ENCODE measurements at regions of chr17 and their contacts with region 1.

Region 1: DNA sequence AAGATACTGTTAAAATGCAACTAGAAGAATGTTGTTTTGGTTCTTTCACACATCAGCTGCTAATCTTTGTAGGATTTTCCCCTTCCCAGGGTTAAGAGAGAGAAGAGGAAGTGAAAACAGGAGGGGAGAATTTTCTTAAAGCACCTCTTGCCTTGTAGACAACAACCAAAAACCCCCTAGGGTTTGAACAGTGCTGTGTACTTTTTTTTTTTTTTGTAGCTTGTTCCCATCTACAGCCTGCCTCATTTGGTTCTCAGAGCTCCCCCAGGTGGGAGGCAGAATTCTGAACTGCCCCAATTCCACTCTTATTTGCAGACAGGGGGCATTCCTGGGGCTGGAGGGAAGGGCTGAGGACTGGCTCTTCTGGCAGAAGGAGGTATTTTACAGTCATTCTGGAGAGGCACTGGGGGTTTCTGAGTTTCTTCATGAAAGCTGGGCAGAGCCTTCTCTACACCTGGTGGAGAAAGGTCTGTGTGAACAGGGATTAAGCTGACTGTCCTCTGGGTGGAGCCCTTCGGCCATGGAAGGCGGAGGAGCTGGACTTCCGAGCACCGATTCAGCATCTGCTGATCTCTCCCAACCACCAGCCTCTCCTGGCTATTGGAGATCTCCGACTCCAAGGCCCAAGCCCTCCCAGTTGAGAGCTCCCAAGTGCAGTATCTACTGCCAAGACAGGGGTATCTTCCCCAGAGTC is 32.2 kb downstream of the SMARCE1 start:
- DNase-seq: peak; percentile 93
- ATAC-seq: peak; percentile 75
- H3K4me3 ChIP-seq: peak overlapping the region; percentile 35; the same call in 1 of the 2 replicates
- H3K27ac ChIP-seq: peak overlapping the region; percentile 29
- H3K4me1 ChIP-seq: peaks cover 30% of the 10 kb centered on the region
- H3K27me3 ChIP-seq: no peaks in the 10 kb centered on the region
- CTCF ChIP-seq: peak; percentile 57 to 65 (median 60)
- EP300 ChIP-seq: peak; percentile 97 to 98
- POLR2A ChIP-seq: no peak
- RAD21 ChIP-seq: peak; percentile 68

Region 2: DNA sequence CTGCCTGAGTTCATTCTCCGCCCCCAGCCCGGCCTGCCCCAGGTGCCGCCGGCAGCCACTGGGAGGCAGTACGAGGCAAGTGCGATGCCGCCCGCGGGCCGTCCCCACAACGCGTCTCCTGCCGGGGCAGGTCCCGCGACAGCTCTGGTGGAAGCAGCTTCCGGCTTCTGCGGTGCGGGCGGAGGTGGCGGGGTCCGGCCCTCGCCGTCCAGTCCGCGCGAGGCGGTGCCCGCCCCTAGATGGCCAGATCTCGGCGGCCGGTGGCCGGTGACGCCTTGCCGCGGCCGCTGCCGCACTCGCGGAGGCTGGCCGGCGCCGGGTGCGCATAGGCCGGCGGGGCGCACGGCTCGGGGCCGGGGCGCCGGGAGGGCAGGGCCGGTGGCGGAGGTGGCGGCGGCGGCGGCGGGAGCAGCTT is 252.7 kb before region 1 on chr17:
- CTCF ChIA-PET with region 1: interaction called, 15 read pairs
- POLR2A ChIA-PET with region 1: no interaction called
- RAD21 ChIA-PET with region 1: interaction called, 9 read pairs
- SMC1A ChIA-PET with region 1: interaction called, 3 read pairs
- in situ Hi-C with region 1: no loop called
- intact Hi-C with region 1: loop called (anchors 5 kb)
- DNase-seq: no peak
- ATAC-seq: peak; percentile 95
- H3K4me3 ChIP-seq: peak overlapping the region; percentile 65; the same call in 1 of the 2 replicates
- H3K27ac ChIP-seq: no peak overlapping the region
- H3K4me1 ChIP-seq: no peaks in the 10 kb centered on the region; the same call in none of the 2 replicates
- H3K27me3 ChIP-seq: peaks cover 0 to 2% of the 10 kb centered on the region in 2 experiments; a peak in 1 of 4 replicates
- CTCF ChIP-seq: peak; percentile 85
- EP300 ChIP-seq: no peak
- POLR2A ChIP-seq: peak; percentile 78
- RAD21 ChIP-seq: peak; percentile 64

Region 3: DNA sequence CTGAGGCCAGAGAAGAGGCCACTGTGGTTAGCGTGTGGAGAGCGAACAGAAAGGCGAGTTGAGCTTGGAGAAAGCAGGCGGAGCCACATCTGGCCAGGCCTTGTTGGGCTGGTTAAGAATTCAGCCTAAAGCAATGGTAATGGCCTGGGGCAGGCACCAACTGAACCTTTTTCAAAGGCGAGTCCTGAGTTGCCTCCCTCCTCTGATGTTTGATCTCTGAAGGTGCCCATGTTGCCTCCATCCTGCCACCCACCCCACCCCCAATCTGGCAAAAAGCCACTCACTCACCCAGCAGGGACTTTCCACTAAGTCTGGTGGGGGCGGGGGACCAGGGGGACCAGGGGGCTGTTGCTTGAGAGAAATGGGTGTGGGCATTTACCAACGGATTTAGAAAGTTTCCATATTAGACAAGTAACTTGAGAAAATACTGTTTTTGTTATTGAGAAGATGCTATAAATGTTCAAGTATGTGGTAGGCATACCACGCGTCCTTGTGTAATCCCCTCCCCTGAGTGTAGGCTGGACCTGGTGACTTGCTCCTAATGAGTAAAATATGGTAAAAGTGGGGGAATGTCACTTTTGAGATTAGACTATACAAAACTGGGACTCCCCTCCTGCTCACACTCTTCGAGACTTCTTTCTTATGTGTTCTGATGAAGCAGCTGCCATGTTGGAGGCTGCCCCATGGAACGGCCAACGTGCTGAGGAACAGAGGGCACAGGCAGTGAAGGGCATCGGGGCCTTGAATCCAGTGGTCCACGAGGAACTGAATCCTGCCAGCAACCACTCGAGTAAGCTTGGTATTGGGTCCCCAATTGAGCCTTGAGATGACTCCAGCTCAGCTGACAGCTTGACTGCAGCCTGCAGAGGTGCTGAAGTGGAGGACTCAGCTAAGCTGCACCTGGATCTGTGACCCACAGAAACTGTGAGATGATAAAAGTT is 84.1 kb before region 1 on chr17:
- CTCF ChIA-PET with region 1: interaction called, 193 read pairs
- POLR2A ChIA-PET with region 1: interaction called, 40 read pairs
- RAD21 ChIA-PET with region 1: interaction called, 123 read pairs
- SMC1A ChIA-PET with region 1: interaction called, 175 read pairs
- in situ Hi-C with region 1: no loop called
- intact Hi-C with region 1: no loop called
- DNase-seq: peak; percentile 71
- ATAC-seq: peak; percentile 74
- H3K4me3 ChIP-seq: no peak overlapping the region
- H3K27ac ChIP-seq: peak overlapping the region; percentile 60; the same call in 1 of the 2 replicates
- H3K4me1 ChIP-seq: peaks cover 38% of the 10 kb centered on the region
- H3K27me3 ChIP-seq: no peaks in the 10 kb centered on the region
- CTCF ChIP-seq: no peak
- EP300 ChIP-seq: peak; percentile 6 to 14; a peak in 1 of 4 replicates
- POLR2A ChIP-seq: no peak
- RAD21 ChIP-seq: no peak

Region 4: DNA sequence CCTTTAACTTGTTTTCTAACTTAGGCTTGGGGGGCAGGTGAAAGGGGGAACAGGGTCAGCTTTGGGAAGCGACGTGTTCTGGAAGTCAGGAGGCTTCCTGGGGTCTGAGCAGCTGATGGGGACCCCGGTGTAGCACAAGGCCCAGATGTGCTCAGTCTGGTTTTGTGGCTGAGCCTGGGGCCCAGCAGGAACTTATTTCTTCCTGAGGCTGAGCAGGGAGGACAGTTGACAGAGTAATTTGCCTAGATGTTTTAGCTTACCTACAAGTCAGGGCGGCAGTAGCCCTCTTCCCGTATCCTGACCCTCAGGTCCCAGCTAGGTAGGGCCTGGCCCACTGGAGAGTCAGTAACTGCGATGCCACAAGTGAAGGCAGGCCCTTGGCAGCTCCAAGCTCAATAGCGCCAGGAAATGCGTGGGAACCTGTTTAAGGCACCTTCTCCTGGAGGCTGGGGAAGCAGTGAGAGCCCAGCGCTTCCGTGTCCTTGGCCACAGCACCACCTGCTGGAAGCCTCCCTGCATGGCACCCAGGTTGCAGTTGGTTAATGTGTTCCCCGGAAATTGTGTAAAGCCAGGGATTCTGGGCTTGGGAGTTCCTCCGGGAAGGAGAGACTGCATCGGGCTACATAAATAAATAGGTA is 55.4 kb before region 1 on chr17:
- CTCF ChIA-PET with region 1: interaction called, 164 read pairs
- POLR2A ChIA-PET with region 1: interaction called, 97 read pairs
- RAD21 ChIA-PET with region 1: interaction called, 185 read pairs
- SMC1A ChIA-PET with region 1: interaction called, 123 read pairs
- in situ Hi-C with region 1: no loop called
- intact Hi-C with region 1: loop called (anchors 1 kb)
- DNase-seq: peak; percentile 72
- ATAC-seq: peak; percentile 5
- H3K4me3 ChIP-seq: peak overlapping the region; percentile 70
- H3K27ac ChIP-seq: peak overlapping the region; percentile 98
- H3K4me1 ChIP-seq: peaks cover 33% of the 10 kb centered on the region
- H3K27me3 ChIP-seq: no peaks in the 10 kb centered on the region
- CTCF ChIP-seq: peak; percentile 91 to 97 (median 94)
- EP300 ChIP-seq: no peak
- POLR2A ChIP-seq: no peak; the same call in 1 of the 2 replicates
- RAD21 ChIP-seq: peak; percentile 90

Region 5: DNA sequence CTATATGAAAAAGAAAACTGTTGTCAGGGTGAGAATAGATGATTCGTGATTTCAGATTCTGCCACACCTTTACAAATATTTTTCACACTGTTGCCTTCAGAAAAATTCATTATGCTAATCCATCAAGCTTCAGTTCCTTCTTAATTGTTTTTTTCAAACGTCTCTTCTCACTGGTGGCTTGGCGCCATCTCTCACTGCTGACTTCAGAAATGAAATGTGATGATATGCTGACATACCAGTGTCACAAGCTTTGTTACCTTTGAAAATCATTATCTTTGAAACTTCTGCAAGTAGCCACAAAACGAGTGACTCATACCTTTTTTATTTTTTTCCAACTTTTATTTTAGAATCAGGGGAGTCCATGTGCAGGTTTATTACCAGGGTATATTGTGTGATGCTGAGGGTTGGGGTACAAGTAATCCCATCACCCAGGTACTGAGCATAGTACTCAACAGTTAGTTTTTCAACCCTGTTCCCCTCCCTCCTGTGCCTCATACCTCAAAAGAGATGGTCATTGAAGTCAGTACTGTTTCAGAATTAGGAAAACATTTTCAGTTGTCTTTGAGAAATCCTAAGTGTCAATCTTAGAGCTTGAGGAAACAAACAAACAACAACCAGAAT is 63.6 kb after region 1 on chr17:
- CTCF ChIA-PET with region 1: interaction called, 14 read pairs
- POLR2A ChIA-PET with region 1: interaction called, 5 read pairs
- RAD21 ChIA-PET with region 1: interaction called, 14 read pairs
- SMC1A ChIA-PET with region 1: interaction called, 6 read pairs
- in situ Hi-C with region 1: no loop called
- intact Hi-C with region 1: no loop called
- DNase-seq: no peak
- ATAC-seq: peak; percentile 84
- H3K4me3 ChIP-seq: no peak overlapping the region; the same call in 1 of the 2 replicates
- H3K27ac ChIP-seq: no peak overlapping the region
- H3K4me1 ChIP-seq: no peaks in the 10 kb centered on the region
- H3K27me3 ChIP-seq: peaks cover 0 to 8% of the 10 kb centered on the region in 2 experiments; a peak in 1 of 4 replicates
- CTCF ChIP-seq: no peak
- EP300 ChIP-seq: peak in 1 of 2 experiments; percentile 52; a peak in 1 of 4 replicates
- POLR2A ChIP-seq: no peak
- RAD21 ChIP-seq: no peak

Region 6: DNA sequence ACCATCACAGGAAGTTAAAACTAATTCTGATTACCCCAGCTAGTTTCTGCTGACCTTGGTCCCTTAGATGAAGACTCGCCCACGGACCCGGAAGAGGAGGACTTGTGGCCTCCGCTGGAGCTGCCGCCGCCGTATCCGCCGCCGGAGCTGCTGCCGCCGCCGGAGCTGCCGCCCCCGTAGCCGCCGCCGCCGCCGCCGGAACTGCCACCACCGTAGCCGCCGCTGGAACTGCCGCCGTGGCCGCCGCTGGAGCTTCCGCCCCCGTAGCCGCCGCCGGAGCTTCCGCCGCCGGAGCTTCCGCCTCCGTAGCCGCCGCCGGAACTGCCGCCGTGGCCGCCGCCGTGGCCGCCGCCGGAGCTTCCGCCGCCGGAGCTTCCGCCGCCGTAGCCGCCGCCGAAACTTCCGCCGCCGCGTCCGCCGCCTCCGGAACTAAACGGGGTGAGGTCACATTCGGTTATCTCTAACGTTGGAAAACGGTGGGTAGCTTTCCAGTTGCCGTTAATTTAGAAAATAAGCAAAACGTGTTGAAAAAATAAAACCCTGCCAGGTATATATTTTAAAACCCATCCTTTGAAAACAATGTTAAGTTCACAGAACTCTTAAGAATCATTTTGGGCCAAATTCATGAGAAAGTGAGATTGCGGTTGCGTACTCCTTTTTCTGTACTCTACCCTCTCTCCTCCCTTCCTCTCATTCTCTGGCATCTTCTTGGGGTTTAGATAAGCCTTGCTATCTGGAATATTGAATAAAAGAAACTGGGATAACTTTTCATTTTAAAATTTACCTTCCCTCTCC is 203.5 kb after region 1 on chr17:
- CTCF ChIA-PET with region 1: interaction called, 10 read pairs
- POLR2A ChIA-PET with region 1: interaction called, 3 read pairs
- RAD21 ChIA-PET with region 1: interaction called, 9 read pairs
- SMC1A ChIA-PET with region 1: interaction called, 4 read pairs
- in situ Hi-C with region 1: no loop called
- intact Hi-C with region 1: no loop called
- DNase-seq: no peak
- ATAC-seq: peak; percentile 91
- H3K4me3 ChIP-seq: peak overlapping the region; percentile 78
- H3K27ac ChIP-seq: peak overlapping the region; percentile 76
- H3K4me1 ChIP-seq: peaks cover 12% of the 10 kb centered on the region
- H3K27me3 ChIP-seq: no peaks in the 10 kb centered on the region
- CTCF ChIP-seq: no peak
- EP300 ChIP-seq: no peak
- POLR2A ChIP-seq: peak; percentile 85
- RAD21 ChIP-seq: no peak

Region 7: DNA sequence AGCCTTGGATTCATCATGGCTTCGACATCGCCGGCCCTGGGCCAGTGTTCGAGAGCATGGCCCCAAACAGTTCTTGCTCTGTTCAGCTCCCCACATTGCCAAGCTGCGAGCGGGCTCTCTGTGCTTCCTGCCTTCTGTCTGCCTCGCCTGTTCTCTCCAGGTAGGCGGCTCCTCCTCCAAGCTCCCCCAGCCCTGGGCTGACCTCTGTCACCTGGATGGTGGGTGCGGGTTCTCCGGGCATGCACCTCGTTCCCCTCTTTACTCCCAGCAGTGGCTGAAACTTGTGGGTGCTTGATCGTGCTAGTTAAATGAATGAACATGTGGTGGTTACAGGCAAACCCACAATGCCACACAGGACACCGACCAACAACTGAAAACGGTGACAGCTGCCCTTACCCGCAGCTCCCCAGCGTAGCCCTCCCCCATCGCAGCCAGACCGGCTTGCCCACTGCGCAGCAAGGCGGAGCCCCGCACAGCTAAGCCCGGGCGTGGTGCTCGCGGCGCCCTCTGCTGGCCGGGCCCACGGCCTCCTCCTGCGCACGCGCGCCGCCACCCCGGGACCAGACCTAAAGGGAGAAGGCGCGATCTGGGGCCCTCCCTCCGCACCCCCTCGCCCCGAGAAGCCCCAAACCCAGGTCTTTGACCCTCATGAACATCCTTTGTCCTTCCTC is 1050.3 kb after region 1 on chr17:
- CTCF ChIA-PET with region 1: interaction called, 40 read pairs
- POLR2A ChIA-PET with region 1: no interaction called
- RAD21 ChIA-PET with region 1: interaction called, 24 read pairs
- SMC1A ChIA-PET with region 1: interaction called, 5 read pairs
- in situ Hi-C with region 1: loop called (anchors 10 kb)
- intact Hi-C with region 1: loop called (anchors 5 kb)
- DNase-seq: peak; percentile 67
- ATAC-seq: peak; percentile 82
- H3K4me3 ChIP-seq: peak overlapping the region; percentile 73
- H3K27ac ChIP-seq: peak overlapping the region; percentile 67
- H3K4me1 ChIP-seq: peaks cover 39% of the 10 kb centered on the region
- H3K27me3 ChIP-seq: no peaks in the 10 kb centered on the region
- CTCF ChIP-seq: peak; percentile 90 to 97 (median 95); a peak in 5 of 6 replicates
- EP300 ChIP-seq: peak in 1 of 2 experiments; percentile 31; a peak in 1 of 4 replicates
- POLR2A ChIP-seq: peak; percentile 66
- RAD21 ChIP-seq: no peak

Measured in GM12878 (cell line).